MCF 10A (cell line): ENCODE measurements at regions of chr17 and their contacts with region 1.

Region 1: GRCh38 chr17:2416010-2416734 is 15.3 kb upstream of the MNT start:
- DNase-seq: peak; percentile 85
- H3K4me3 Mint-ChIP-seq: no peak overlapping the region
- H3K27ac Mint-ChIP-seq: no peak overlapping the region
- H3K4me1 Mint-ChIP-seq: no peaks in the 10 kb centered on the region
- H3K27me3 Mint-ChIP-seq: no peaks in the 10 kb centered on the region
- CTCF ChIP-seq: peak; percentile 96

Region 2: GRCh38 chr17:2361010-2361760 is 55.0 kb before region 1 on chr17:
- CTCF ChIA-PET with region 1: interaction called, 10 read pairs
- POLR2A ChIA-PET with region 1: interaction called, 4 read pairs
- intact Hi-C with region 1: no loop called
- DNase-seq: no peak
- H3K4me3 Mint-ChIP-seq: no peak overlapping the region
- H3K27ac Mint-ChIP-seq: peak overlapping the region; percentile 84
- H3K4me1 Mint-ChIP-seq: peaks cover 17% of the 10 kb centered on the region
- H3K27me3 Mint-ChIP-seq: no peaks in the 10 kb centered on the region
- CTCF ChIP-seq: no peak

Region 3: GRCh38 chr17:2380226-2380922 is 35.8 kb before region 1 on chr17:
- CTCF ChIA-PET with region 1: interaction called, 309 read pairs
- POLR2A ChIA-PET with region 1: interaction called, 61 read pairs
- intact Hi-C with region 1: loop called (anchors 1 kb)
- DNase-seq: no peak
- H3K4me3 Mint-ChIP-seq: no peak overlapping the region
- H3K27ac Mint-ChIP-seq: no peak overlapping the region
- H3K4me1 Mint-ChIP-seq: no peaks in the 10 kb centered on the region
- H3K27me3 Mint-ChIP-seq: no peaks in the 10 kb centered on the region
- CTCF ChIP-seq: no peak

Region 4: DNA sequence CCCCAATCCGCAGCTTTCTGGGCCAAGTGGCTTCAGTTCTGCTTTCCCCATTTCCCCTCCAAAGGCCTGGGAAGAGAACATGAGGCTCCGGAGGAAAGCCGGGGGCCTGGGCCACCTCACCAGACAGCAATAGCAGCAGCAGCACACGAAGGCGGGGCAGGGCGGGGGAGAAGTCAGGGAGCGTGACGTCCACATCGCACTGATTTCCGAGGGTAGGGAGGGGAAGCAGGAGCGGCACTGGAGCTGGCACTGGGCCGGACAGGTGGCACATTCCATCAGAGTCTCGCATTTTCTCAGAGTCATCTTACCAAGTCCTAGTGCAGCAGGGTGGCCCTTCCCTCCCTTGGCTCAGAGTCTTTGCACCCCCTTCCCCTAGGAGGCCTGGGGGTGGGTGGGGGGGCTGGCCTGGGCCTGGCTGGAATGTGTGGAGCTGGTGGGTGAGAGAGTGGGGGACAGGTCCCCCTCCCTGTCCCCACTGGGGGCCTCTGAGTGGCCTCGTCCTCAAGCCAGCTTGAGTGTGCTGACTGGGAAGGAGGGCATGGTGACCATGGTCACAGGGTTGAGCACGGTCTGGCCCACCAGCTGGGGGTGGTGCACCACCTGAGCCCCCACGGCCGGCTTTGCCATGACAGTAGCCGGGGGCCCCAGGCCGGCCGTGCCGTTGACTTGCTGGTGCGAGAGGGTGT is 29.6 kb before region 1 on chr17:
- CTCF ChIA-PET with region 1: interaction called, 309 read pairs
- POLR2A ChIA-PET with region 1: interaction called, 61 read pairs
- intact Hi-C with region 1: loop called (anchors 1 kb)
- DNase-seq: no peak
- H3K4me3 Mint-ChIP-seq: no peak overlapping the region
- H3K27ac Mint-ChIP-seq: no peak overlapping the region
- H3K4me1 Mint-ChIP-seq: peaks cover 2% of the 10 kb centered on the region
- H3K27me3 Mint-ChIP-seq: no peaks in the 10 kb centered on the region
- CTCF ChIP-seq: no peak

Region 5: GRCh38 chr17:2392252-2393173 is 23.7 kb before region 1 on chr17:
- CTCF ChIA-PET with region 1: interaction called, 309 read pairs
- POLR2A ChIA-PET with region 1: interaction called, 11 read pairs
- intact Hi-C with region 1: no loop called
- DNase-seq: peak; percentile 91
- H3K4me3 Mint-ChIP-seq: peak overlapping the region; percentile 71
- H3K27ac Mint-ChIP-seq: peak overlapping the region; percentile 83
- H3K4me1 Mint-ChIP-seq: peaks cover 18% of the 10 kb centered on the region
- H3K27me3 Mint-ChIP-seq: no peaks in the 10 kb centered on the region
- CTCF ChIP-seq: no peak

Region 6: DNA sequence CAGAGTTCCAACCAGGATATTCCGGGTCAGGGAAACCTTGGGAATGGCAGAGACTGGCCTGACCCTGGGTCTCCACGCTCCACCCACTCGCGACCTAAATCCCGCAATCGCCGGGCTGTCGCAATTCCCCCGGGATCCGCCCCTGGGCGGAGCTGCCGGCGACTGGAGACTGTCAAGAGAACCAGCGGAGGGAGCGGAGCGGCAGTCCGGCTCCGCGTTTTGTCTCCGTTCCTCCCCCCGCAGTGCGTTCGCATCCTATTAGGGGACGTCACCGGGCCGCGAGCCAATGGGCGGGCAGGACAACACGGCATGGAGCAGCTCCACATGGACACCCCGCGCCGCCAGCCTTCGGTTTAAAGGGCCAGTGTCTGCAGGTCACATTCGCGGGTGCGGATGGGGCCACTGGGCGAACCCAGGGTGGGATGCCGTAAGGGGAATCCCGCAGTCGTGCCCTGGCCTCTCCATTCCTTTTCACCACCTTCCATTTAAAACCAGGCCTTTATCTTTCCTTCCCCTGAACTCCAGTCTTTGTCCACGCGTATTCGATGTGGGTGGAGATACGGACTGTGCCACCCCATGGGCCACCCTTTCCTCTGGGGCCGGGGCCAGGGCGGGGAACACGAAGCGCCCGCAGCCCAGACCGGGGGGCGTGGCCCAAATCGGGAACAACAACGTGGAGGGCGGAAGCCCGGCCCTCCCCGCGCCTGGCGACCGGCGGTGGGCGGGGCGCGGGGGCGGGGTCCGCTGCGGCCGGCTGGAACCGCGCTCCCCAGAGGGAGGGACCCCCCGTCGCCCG is 14.5 kb before region 1 on chr17:
- CTCF ChIA-PET with region 1: interaction called, 21 read pairs
- POLR2A ChIA-PET with region 1: interaction called, 39 read pairs
- intact Hi-C with region 1: loop called (anchors 2 kb)
- DNase-seq: peak; percentile 99
- H3K4me3 Mint-ChIP-seq: peak overlapping the region; percentile 87
- H3K27ac Mint-ChIP-seq: peak overlapping the region; percentile 99
- H3K4me1 Mint-ChIP-seq: peaks cover 49% of the 10 kb centered on the region
- H3K27me3 Mint-ChIP-seq: no peaks in the 10 kb centered on the region
- CTCF ChIP-seq: no peak

Region 7: DNA sequence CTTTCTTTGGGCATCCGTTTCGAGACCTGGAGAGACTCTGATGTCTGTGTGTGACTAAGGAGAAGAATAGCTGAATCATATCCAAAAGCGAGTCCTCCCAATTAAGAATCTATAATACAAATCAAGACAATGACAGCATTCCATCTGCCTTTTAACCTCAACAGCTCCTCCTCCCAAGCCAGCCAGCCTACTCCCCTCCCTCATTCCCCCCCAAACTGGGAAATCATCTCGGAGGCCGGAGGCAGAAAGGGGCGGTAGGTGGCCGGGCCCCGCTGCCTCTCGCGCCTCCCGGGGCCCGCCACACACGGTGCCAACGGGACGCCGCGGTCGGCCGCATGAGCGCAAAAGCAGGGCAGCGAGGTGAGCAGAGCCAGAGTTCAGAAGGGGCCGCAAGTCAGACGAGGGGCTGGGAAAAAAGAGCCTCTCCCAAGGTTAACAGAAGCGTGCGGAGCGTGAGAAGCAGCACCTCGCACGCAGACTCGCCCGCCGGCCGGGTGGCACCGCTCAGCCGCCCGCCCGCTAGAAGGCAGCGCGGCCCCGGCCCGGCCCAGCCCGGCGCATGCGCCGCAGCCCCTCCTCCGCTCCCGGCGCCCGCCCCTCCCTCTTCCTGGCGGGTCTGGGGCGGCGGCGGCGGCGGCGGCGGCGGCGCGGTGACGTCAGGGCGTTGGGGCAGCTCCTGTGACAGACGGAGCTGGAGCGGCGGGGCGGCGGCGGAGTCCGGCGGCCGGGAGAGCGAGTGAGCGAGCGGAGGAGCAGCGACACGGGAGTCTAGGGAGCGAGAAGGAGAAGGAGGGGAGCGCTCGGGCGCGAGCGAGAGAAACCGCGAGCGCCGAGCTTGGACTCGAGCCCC is 177.0 kb after region 1 on chr17 and contains the start of gene PAFAH1B1:
- CTCF ChIA-PET with region 1: no interaction called
- POLR2A ChIA-PET with region 1: no interaction called
- intact Hi-C with region 1: loop called (anchors 2 kb)
- DNase-seq: peak; percentile 93
- H3K4me3 Mint-ChIP-seq: peak within 1 kb of the TSS; percentile 98
- H3K27ac Mint-ChIP-seq: peak within 1 kb of the TSS; percentile 96
- H3K4me1 Mint-ChIP-seq: peaks cover 14% of the 10 kb centered on the region
- H3K27me3 Mint-ChIP-seq: no peaks in the 10 kb centered on the region
- CTCF ChIP-seq: peak; percentile 7
- total RNA-seq, gene PAFAH1B1: 170 and 192 TPM in 2 replicates